Left colon (tissue), 2 donors: ENCODE measurements at regions of chr7 and their contacts with region 1.

Region 1: GRCh38 chr7:101201695-101202604 is 1.1 kb upstream of the MOGAT3 start:
- DNase-seq: peak; percentile 77 to 86
- ATAC-seq: peak; percentile 83

Region 2: DNA sequence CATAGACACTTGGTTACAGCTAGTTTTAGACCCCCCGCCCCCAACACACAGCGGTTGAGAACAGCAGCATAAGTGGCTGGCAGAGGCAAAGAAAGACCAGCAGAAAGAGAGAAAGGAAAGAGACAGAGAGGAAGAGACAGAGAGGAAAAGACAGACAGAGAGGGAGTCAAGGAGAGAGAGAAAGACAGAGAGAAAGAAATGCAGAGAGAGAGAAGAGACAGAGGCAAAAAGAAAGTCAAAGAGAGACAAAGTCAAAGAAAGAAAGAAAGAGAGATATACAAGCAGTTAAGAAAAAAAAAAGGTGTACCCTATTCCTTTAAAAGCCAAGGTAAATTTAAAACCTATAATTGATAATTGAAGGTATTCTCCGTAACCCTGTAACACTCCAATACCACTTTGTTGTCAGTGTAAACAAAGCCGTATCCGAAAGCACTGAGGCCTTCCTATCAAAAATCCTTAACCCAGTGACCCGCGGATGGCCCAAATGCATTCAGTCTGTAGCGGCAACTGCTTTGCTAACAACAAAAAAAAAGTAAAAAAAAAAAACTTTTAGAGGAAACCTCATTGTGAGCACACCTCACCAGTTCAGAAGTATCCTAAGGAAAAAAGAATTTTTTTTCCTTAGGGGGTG is 361.4 kb before region 1 on chr7:
- intact Hi-C with region 1: no loop called
- DNase-seq: no peak
- ATAC-seq: no peak

Region 3: GRCh38 chr7:101232141-101232850 is 30.3 kb after region 1 on chr7:
- intact Hi-C with region 1: no loop called
- DNase-seq: peak; percentile 89 to 91
- ATAC-seq: peak; percentile 78

Region 4: DNA sequence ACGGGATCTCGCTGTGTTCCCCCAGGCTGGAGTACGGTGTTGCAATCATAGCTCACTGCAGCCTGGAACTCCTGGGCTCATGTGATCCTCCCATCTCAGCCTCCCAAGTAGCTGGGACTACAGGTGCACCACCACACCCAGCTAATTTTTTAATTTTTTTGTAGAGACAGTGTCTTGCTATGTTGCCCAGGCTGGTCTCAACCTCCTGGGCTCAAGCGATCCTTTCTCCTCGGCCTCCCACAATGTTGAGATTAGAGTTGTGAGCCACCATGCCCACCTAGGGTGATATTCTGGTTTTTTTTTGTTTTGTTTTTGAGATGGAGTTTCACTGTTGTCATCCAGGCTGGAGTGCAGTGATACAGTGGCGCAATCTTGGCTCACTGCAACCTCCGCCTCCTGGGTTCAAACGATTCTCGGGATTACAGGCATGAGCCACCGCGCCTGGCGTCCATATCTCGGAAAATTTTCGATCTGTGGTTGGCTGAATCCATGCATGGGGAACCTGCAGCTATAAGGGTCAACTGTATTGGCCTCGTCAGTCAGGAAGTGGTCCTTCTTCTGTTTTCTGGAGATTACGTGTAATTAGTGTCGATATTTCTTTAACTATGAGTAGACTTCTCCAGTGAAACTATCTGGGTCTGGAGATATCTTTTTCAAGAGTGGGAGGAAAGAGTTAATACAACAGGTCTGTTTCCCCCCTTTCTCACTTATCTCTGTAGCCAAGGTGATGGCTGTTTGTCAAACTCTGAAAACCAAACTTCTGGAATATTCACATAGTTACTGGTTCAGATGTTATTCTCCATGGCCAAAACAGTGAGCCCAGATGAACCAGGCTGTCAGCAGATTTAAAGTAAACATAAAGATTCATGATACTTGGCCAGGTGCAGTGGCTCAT is 63.9 kb after region 1 on chr7:
- intact Hi-C with region 1: loop called in 1 of 2 experiments (anchors 10 kb)
- DNase-seq: no peak
- ATAC-seq: no peak

Region 5: GRCh38 chr7:101299511-101300464 is 97.8 kb after region 1 on chr7:
- intact Hi-C with region 1: no loop called
- DNase-seq: no peak
- ATAC-seq: peak; percentile 25

Region 6: GRCh38 chr7:101333912-101334311 is 132.0 kb after region 1 on chr7:
- intact Hi-C with region 1: no loop called
- DNase-seq: peak; percentile 38 to 39
- ATAC-seq: peak; percentile 99